Common myeloid progenitor, CD34-positive (primary cell): ENCODE measurements at regions of chr2 and their contacts with region 1.

Region 1: GRCh38 chr2:66522611-66523376 is 87.9 kb downstream of the MEIS1 start:
- DNase-seq: peak in 1 of 3 donors; percentile 59
- H3K4me3 ChIP-seq: peak overlapping the region in 1 of 7 experiments; percentile 45
- H3K27ac ChIP-seq: no peak overlapping the region
- H3K4me1 ChIP-seq: peaks cover 32 to 72% (median 61%) of the 10 kb centered on the region in 4 experiments
- H3K27me3 ChIP-seq: no peaks in the 10 kb centered on the region

Region 2: DNA sequence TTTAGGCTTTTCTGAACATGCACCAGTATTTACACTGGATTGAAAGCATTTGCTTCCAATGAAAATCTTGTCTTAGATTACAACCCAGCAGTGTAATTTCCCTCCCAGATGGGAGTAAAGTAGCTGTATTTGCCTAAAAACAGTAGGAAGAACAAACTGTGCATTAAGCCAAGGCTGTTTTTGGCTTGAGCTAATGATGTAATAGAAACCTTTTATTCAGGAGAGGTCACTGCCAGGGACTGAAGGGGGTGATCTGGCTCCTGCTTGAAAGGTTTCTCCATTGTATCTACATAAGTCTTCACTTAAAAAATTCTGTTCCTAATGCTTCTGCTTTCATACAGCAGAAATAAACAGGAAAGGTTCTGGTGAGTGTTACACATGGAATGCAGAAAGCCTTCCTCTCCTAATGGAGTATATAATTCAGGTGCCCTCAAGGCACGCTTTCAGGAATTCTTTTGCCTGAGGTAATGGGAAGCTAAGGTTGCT is 13.4 kb before region 1 on chr2:
- CTCF ChIA-PET with region 1: interaction called, 19 read pairs
- POLR2A ChIA-PET with region 1: no interaction called
- DNase-seq: no peak
- H3K4me3 ChIP-seq: peak overlapping the region in 2 of 7 experiments; percentile 43 to 58
- H3K27ac ChIP-seq: peak overlapping the region in 1 of 2 experiments; percentile 76
- H3K4me1 ChIP-seq: peaks cover 13 to 44% (median 29%) of the 10 kb centered on the region in 4 experiments
- H3K27me3 ChIP-seq: no peaks in the 10 kb centered on the region